Dendritic cell treated with granulocyte-macrophage colony-stimulating factor and Interleukin-4, amounts not matched to agents 40 ng/mL and 50 ng/mL, for 4 days (primary cell): ENCODE measurements at regions of chr3 and their contacts with region 1.

Region 1: GRCh38 chr3:10189557-10190354 is 25.0 kb downstream of the IRAK2 start:
- H3K4me3 Mint-ChIP-seq: no peak overlapping the region
- H3K27ac Mint-ChIP-seq: peak overlapping the region; percentile 67
- H3K4me1 Mint-ChIP-seq: peaks cover 83% of the 10 kb centered on the region
- H3K27me3 Mint-ChIP-seq: no peaks in the 10 kb centered on the region

Region 2: DNA sequence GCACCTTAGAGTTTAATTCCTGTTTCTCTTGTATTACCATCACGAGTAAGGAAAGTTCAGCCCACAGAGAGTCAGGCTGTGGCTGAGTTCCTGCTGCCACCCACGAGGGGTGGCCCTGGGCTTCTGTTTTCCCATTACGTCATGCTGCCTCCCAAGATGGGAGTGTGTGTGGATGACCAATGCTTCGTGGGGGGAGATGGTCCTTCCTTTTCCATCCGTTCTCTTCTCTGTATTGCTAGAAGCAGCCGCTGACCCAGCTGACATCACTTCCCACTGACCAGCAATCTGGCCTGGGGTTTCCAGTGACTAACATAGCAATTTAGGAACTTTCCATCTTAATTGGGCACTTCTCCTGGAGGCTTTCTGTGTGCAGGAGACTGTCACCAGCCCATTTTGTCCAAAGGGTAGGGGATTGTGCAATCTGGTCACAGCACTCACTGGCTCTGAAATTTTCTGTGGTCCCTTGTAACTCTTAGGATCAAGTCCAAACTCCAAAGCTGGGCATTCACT is 15.8 kb before region 1 on chr3:
- intact Hi-C with region 1: loop called (anchors 1 kb)
- H3K4me3 Mint-ChIP-seq: peak overlapping the region; percentile 26
- H3K27ac Mint-ChIP-seq: peak overlapping the region; percentile 85
- H3K4me1 Mint-ChIP-seq: peaks cover 21% of the 10 kb centered on the region
- H3K27me3 Mint-ChIP-seq: no peaks in the 10 kb centered on the region

Region 3: GRCh38 chr3:10551821-10552630 is 362.3 kb after region 1 on chr3:
- intact Hi-C with region 1: no loop called
- H3K4me3 Mint-ChIP-seq: no peak overlapping the region
- H3K27ac Mint-ChIP-seq: peak overlapping the region; percentile 16
- H3K4me1 Mint-ChIP-seq: peaks cover 42% of the 10 kb centered on the region
- H3K27me3 Mint-ChIP-seq: peaks cover 2% of the 10 kb centered on the region